ENCODE measurements at regions of chr2 and their contacts with region 1.

Region 1: GRCh38 chr2:146312899-146313298 is 1531.9 kb upstream of the ACVR2A start:
- DNase-seq: no peak
- H3K4me3 Mint-ChIP-seq: no peak overlapping the region
- H3K27ac Mint-ChIP-seq: no peak overlapping the region
- H3K4me1 Mint-ChIP-seq: no peaks in the 10 kb centered on the region
- H3K27me3 Mint-ChIP-seq: no peaks in the 10 kb centered on the region
- CTCF ChIP-seq: no peak

Region 2: GRCh38 chr2:145800151-145801091 is 512.5 kb before region 1 on chr2:
- CTCF ChIA-PET with region 1: no interaction called
- intact Hi-C with region 1: loop called (anchors 5 kb)
- DNase-seq: peak; percentile 83
- H3K4me3 Mint-ChIP-seq: peak overlapping the region; percentile 37
- H3K27ac Mint-ChIP-seq: peak overlapping the region; percentile 87
- H3K4me1 Mint-ChIP-seq: peaks cover 19% of the 10 kb centered on the region
- H3K27me3 Mint-ChIP-seq: no peaks in the 10 kb centered on the region
- CTCF ChIP-seq: no peak

Region 3: GRCh38 chr2:145906356-145906755 is 406.5 kb before region 1 on chr2:
- CTCF ChIA-PET with region 1: no interaction called
- intact Hi-C with region 1: loop called (anchors 5 kb)
- DNase-seq: peak; percentile 62
- H3K4me3 Mint-ChIP-seq: peak overlapping the region; percentile 16
- H3K27ac Mint-ChIP-seq: peak overlapping the region; percentile 89
- H3K4me1 Mint-ChIP-seq: peaks cover 50% of the 10 kb centered on the region
- H3K27me3 Mint-ChIP-seq: no peaks in the 10 kb centered on the region
- CTCF ChIP-seq: no peak

Region 4: GRCh38 chr2:145939949-145940348 is 372.9 kb before region 1 on chr2:
- CTCF ChIA-PET with region 1: no interaction called
- intact Hi-C with region 1: loop called (anchors 5 kb)
- DNase-seq: no peak
- H3K4me3 Mint-ChIP-seq: no peak overlapping the region
- H3K27ac Mint-ChIP-seq: no peak overlapping the region
- H3K4me1 Mint-ChIP-seq: no peaks in the 10 kb centered on the region
- H3K27me3 Mint-ChIP-seq: no peaks in the 10 kb centered on the region
- CTCF ChIP-seq: no peak

Region 5: DNA sequence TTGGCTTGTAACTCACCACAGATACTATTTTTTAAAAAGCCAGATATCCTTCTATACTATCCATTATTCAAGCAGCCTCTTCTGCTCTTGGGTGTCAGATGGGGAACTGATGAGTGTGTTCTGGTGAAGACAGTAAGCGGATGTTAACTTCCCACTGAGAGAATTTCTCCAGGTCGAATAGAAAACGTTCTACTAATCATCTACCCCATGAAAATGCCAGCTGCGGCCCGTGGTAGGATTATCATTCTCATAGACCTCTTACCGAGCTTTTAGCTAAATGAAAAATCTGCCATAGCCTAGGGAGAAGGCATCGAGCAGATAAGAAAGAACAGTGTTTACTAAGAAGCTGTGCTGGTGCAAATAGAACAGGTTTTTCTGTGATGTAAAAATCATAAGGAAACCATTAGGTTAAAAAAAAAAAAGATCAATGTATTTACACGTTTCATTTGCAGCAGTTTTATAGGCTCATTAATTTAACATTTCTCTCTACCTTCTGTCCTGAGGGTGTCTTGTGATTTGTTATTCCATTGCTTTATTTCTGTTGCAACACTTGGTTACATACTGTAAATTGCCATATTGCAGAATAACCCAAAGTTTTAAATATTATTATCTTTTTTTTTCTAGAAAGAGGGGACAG is 271.5 kb before region 1 on chr2:
- CTCF ChIA-PET with region 1: no interaction called
- intact Hi-C with region 1: loop called (anchors 10 kb)
- DNase-seq: no peak
- H3K4me3 Mint-ChIP-seq: no peak overlapping the region
- H3K27ac Mint-ChIP-seq: no peak overlapping the region
- H3K4me1 Mint-ChIP-seq: no peaks in the 10 kb centered on the region
- H3K27me3 Mint-ChIP-seq: no peaks in the 10 kb centered on the region
- CTCF ChIP-seq: no peak

Region 6: GRCh38 chr2:146523196-146523595 is 210.3 kb after region 1 on chr2:
- CTCF ChIA-PET with region 1: no interaction called
- intact Hi-C with region 1: loop called (anchors 10 kb)
- DNase-seq: no peak
- H3K4me3 Mint-ChIP-seq: no peak overlapping the region
- H3K27ac Mint-ChIP-seq: no peak overlapping the region
- H3K4me1 Mint-ChIP-seq: no peaks in the 10 kb centered on the region
- H3K27me3 Mint-ChIP-seq: no peaks in the 10 kb centered on the region
- CTCF ChIP-seq: peak; percentile 27

Region 7: GRCh38 chr2:146661473-146662096 is 348.7 kb after region 1 on chr2:
- CTCF ChIA-PET with region 1: interaction called, 3 read pairs
- intact Hi-C with region 1: loop called (anchors 5 kb)
- DNase-seq: no peak
- H3K4me3 Mint-ChIP-seq: no peak overlapping the region
- H3K27ac Mint-ChIP-seq: no peak overlapping the region
- H3K4me1 Mint-ChIP-seq: peaks cover 27% of the 10 kb centered on the region
- H3K27me3 Mint-ChIP-seq: no peaks in the 10 kb centered on the region
- CTCF ChIP-seq: peak; percentile 44

Region 8: GRCh38 chr2:148110184-148110583 is 1797.3 kb after region 1 on chr2:
- CTCF ChIA-PET with region 1: no interaction called
- intact Hi-C with region 1: no loop called
- DNase-seq: no peak
- H3K4me3 Mint-ChIP-seq: no peak overlapping the region
- H3K27ac Mint-ChIP-seq: no peak overlapping the region
- H3K4me1 Mint-ChIP-seq: no peaks in the 10 kb centered on the region
- H3K27me3 Mint-ChIP-seq: no peaks in the 10 kb centered on the region
- CTCF ChIP-seq: no peak